HepG2 (cell line): ENCODE measurements at regions of chr14 and their contacts with region 1.

Region 1: GRCh38 chr14:81303248-81304221 is 82.8 kb upstream of the GTF2A1 start:
- DNase-seq: peak; percentile 98
- ATAC-seq: peak; percentile 97
- H3K4me3 ChIP-seq: peak overlapping the region; percentile 26 to 51 (median 39); a peak in 4 of 6 replicates
- H3K27ac ChIP-seq: peak overlapping the region; percentile 91
- H3K4me1 ChIP-seq: peaks cover 42% of the 10 kb centered on the region
- H3K27me3 ChIP-seq: no peaks in the 10 kb centered on the region
- CTCF ChIP-seq: no peak
- EP300 ChIP-seq: peak; percentile 61 to 91; a peak in 3 of 4 replicates
- POLR2A ChIP-seq: peak in 1 of 2 experiments; percentile 55; a peak in 1 of 4 replicates
- RAD21 ChIP-seq: no peak; the same call in 1 of the 2 replicates

Region 2: GRCh38 chr14:81187832-81188522 is 115.6 kb before region 1 on chr14:
- CTCF ChIA-PET with region 1: no interaction called
- POLR2A ChIA-PET with region 1: no interaction called
- in situ Hi-C with region 1: no loop called
- intact Hi-C with region 1: no loop called
- DNase-seq: no peak
- ATAC-seq: no peak
- H3K4me3 ChIP-seq: no peak overlapping the region
- H3K27ac ChIP-seq: no peak overlapping the region
- H3K4me1 ChIP-seq: 0 out of 2 replicates have a peak, but pooled peaks cover 5% of the 10 kb centered on the region
- H3K27me3 ChIP-seq: no peaks in the 10 kb centered on the region
- CTCF ChIP-seq: no peak
- EP300 ChIP-seq: no peak
- POLR2A ChIP-seq: no peak
- RAD21 ChIP-seq: no peak

Region 3: GRCh38 chr14:81287016-81287776 is 16.3 kb before region 1 on chr14:
- CTCF ChIA-PET with region 1: no interaction called
- POLR2A ChIA-PET with region 1: no interaction called
- in situ Hi-C with region 1: no loop called
- intact Hi-C with region 1: no loop called
- DNase-seq: no peak
- ATAC-seq: no peak
- H3K4me3 ChIP-seq: no peak overlapping the region
- H3K27ac ChIP-seq: no peak overlapping the region
- H3K4me1 ChIP-seq: no peaks in the 10 kb centered on the region
- H3K27me3 ChIP-seq: no peaks in the 10 kb centered on the region
- CTCF ChIP-seq: no peak
- EP300 ChIP-seq: no peak
- POLR2A ChIP-seq: no peak
- RAD21 ChIP-seq: no peak

Region 4: GRCh38 chr14:81319946-81320345 is 16.4 kb after region 1 on chr14:
- CTCF ChIA-PET with region 1: no interaction called
- POLR2A ChIA-PET with region 1: no interaction called
- in situ Hi-C with region 1: no loop called
- intact Hi-C with region 1: loop called (anchors 2 kb)
- DNase-seq: no peak
- ATAC-seq: peak; percentile 64
- H3K4me3 ChIP-seq: no peak overlapping the region
- H3K27ac ChIP-seq: peak overlapping the region; percentile 44
- H3K4me1 ChIP-seq: peaks cover 42% of the 10 kb centered on the region
- H3K27me3 ChIP-seq: no peaks in the 10 kb centered on the region
- CTCF ChIP-seq: no peak
- EP300 ChIP-seq: no peak
- POLR2A ChIP-seq: no peak
- RAD21 ChIP-seq: no peak

Region 5: GRCh38 chr14:81436296-81437138 is 133.0 kb after region 1 on chr14:
- CTCF ChIA-PET with region 1: no interaction called
- POLR2A ChIA-PET with region 1: interaction called, 8 read pairs
- in situ Hi-C with region 1: no loop called
- intact Hi-C with region 1: loop called (anchors 1 kb)
- DNase-seq: peak; percentile 54
- ATAC-seq: peak; percentile 93
- H3K4me3 ChIP-seq: peak overlapping the region; percentile 48 to 84 (median 71)
- H3K27ac ChIP-seq: no peak overlapping the region
- H3K4me1 ChIP-seq: peaks cover 22% of the 10 kb centered on the region
- H3K27me3 ChIP-seq: no peaks in the 10 kb centered on the region; a peak in 2 of 5 replicates
- CTCF ChIP-seq: no peak
- EP300 ChIP-seq: no peak
- POLR2A ChIP-seq: peak in 1 of 2 experiments; percentile 50; a peak in 2 of 4 replicates
- RAD21 ChIP-seq: 0 out of 2 replicates have a peak, but pooled peaks have one; percentile 42